ENCODE measurements at regions of chr3 and their contacts with region 1.

Region 1: GRCh38 chr3:128426128-128426921 is 40.4 kb downstream of the DNAJB8 start:
- DNase-seq: peak; percentile 62
- H3K4me3 Mint-ChIP-seq: no peak overlapping the region
- H3K27ac Mint-ChIP-seq: no peak overlapping the region
- H3K4me1 Mint-ChIP-seq: no peaks in the 10 kb centered on the region
- H3K27me3 Mint-ChIP-seq: peaks cover 20% of the 10 kb centered on the region

Region 2: DNA sequence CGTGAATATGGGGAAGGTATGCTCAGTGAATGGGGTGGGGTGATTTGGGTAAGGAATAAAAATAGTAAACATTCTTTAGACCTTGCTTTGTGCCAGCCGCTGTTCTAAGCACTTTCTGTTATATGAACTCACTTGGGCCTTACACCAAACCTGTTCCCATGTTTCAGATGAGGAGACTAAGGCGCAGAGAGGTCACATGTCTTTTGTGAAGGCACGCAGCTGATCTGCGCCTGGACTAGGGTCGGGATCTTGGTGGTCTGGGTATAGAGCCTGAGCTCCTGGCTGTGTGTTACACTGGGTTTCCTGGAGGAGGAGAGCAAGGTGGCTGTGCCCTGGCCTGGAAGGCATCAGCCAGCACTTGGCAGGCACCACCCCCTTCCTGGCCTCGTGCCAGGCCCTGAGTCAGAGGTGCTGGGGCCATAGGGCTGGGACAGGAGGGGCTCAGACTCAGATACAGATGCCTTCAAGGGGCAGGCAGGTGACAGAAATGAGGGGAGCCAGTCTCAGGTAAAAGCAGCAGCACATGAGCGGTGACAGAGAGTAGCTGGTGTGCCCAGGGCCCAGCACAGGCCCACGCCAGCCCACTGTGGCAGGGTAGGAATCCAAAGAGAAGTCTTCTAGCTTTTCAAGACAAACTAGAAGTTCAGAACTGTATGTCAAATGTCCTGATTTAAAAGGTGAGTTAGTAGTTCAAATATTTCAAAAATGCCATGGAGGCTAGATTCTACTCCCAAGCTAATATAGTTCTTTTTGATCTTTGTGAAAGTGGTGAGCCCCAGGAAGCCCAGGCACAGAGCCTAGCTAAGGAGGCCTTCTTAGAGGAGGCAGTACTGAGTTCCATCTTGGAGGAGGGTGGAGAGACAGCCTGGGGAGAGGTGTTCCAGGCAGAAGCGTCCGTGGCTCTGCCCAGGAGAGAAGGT is 42.7 kb before region 1 on chr3:
- CTCF ChIA-PET with region 1: no interaction called
- POLR2A ChIA-PET with region 1: no interaction called
- intact Hi-C with region 1: no loop called
- DNase-seq: peak; percentile 46
- H3K4me3 Mint-ChIP-seq: no peak overlapping the region
- H3K27ac Mint-ChIP-seq: no peak overlapping the region
- H3K4me1 Mint-ChIP-seq: no peaks in the 10 kb centered on the region
- H3K27me3 Mint-ChIP-seq: no peaks in the 10 kb centered on the region

Region 3: GRCh38 chr3:128487813-128488635 is 61.7 kb after region 1 on chr3:
- CTCF ChIA-PET with region 1: interaction called, 20 read pairs
- POLR2A ChIA-PET with region 1: no interaction called
- intact Hi-C with region 1: no loop called
- DNase-seq: peak; percentile 52
- H3K4me3 Mint-ChIP-seq: no peak overlapping the region
- H3K27ac Mint-ChIP-seq: no peak overlapping the region
- H3K4me1 Mint-ChIP-seq: peaks cover 42% of the 10 kb centered on the region
- H3K27me3 Mint-ChIP-seq: peaks cover 71% of the 10 kb centered on the region

Region 4: DNA sequence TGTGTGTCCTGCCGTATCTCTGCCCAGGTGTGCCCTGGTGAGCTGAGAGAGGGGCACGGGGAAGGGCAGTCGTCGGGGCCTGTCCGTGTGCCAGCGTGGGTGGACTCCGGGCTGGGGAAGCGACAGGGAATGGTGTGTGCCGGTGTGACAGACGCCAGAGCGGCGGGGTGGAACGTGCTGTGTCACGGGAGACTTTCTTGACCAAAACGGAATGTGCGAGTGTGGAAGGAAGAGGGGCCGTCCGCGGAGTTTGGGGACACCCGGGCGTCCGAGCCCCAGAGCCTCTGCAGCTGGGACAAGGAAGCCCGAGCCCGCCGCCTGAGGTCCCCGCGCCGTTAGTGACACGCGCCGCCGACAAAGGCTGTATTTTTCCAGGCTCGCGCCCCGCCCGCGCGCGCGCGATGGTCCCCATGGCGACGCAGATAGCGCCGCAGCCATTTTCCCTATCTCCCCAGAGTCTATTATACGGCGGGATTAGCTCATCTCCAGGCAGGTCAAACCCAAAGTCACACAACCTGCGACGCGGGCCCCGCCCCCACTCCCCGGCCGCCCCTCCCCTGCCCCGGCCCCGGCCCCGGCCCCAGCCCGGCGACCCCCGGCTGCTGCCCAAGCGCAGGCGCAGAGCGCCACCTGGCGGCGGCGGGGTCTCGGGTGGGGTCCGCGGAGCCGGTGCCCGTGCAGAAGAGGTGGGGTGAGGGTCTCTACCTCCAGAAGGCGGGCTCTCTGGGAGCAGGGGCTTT is 71.2 kb after region 1 on chr3:
- CTCF ChIA-PET with region 1: interaction called, 25 read pairs
- POLR2A ChIA-PET with region 1: no interaction called
- intact Hi-C with region 1: loop called (anchors 1 kb)
- DNase-seq: peak; percentile 77
- H3K4me3 Mint-ChIP-seq: peak overlapping the region; percentile 60
- H3K27ac Mint-ChIP-seq: no peak overlapping the region
- H3K4me1 Mint-ChIP-seq: peaks cover 7% of the 10 kb centered on the region
- H3K27me3 Mint-ChIP-seq: peaks cover 46% of the 10 kb centered on the region

Region 5: DNA sequence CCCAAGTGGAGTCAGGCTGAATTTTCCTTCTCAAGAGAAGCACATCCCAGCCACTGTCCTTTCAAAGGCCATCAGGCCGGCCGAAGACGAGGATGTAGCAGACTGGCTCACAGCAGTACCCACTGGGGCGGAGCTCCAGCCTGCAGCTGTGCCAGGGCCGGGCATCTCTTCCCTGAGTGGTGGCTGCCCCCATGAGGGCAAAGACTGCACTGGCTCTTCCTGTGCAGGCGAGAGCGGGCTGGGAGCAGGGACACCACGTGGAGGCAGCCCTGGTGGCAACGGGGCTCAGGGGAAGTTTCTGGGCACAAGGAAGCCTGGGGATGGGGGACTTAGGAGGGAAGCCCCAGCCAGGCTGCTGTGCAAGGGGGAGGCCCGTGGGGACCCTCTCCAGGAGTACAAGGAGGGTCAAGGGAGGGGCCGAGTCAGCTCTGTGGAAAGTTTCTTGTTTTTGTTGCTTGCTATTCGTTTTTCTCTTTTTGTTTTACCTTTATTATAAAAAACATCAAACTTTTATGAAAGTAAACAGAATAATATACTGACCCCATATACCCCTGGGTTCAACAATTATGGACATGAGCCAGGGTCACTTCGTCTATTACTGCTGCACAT is 158.2 kb after region 1 on chr3:
- CTCF ChIA-PET with region 1: interaction called, 33 read pairs
- POLR2A ChIA-PET with region 1: no interaction called
- intact Hi-C with region 1: loop called (anchors 5 kb)
- DNase-seq: peak; percentile 66
- H3K4me3 Mint-ChIP-seq: no peak overlapping the region
- H3K27ac Mint-ChIP-seq: no peak overlapping the region
- H3K4me1 Mint-ChIP-seq: peaks cover 3% of the 10 kb centered on the region
- H3K27me3 Mint-ChIP-seq: peaks cover 9% of the 10 kb centered on the region

Region 6: DNA sequence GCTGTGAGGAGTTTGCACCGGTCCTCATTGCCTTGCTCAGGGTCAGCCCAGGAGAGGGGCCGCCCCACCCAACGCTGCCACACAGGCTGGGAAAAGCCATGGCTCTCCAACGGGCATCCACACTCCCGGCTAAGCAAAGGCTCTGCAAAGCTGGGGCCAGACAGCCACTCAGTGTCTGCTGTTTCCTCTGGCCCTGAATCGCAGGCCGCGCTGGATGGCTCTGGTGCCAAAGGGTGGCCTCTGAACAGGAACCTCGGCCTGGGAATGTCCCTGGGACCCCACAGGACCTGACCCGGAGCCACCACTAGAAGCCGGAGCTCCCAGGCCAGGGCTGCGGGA is 181.4 kb after region 1 on chr3:
- CTCF ChIA-PET with region 1: interaction called, 47 read pairs
- POLR2A ChIA-PET with region 1: no interaction called
- intact Hi-C with region 1: loop called (anchors 1 kb)
- DNase-seq: no peak
- H3K4me3 Mint-ChIP-seq: no peak overlapping the region
- H3K27ac Mint-ChIP-seq: no peak overlapping the region
- H3K4me1 Mint-ChIP-seq: peaks cover 2% of the 10 kb centered on the region
- H3K27me3 Mint-ChIP-seq: no peaks in the 10 kb centered on the region

Measured in activated CD4-positive, alpha-beta memory T cell treated with anti-CD3 and anti-CD28 coated beads for 36 hours (primary cell).